CD4-positive, alpha-beta memory T cell (primary cell): ENCODE measurements at regions of chr5 and their contacts with region 1.

Region 1: GRCh38 chr5:163505368-163506094 is at the start of gene MAT2B:
- DNase-seq: peak; percentile 95 to 97 (median 95)
- H3K4me3 ChIP-seq: peak within 1 kb of the TSS; percentile 70 to 75
- H3K4me3 Mint-ChIP-seq: peak within 1 kb of the TSS; percentile 92 to 100 (median 98)
- H3K27ac ChIP-seq: peak within 1 kb of the TSS; percentile 90
- H3K27ac Mint-ChIP-seq: peak within 1 kb of the TSS; percentile 97 to 100 (median 99)
- H3K4me1 ChIP-seq: peaks cover 42% of the 10 kb centered on the region
- H3K4me1 Mint-ChIP-seq: peaks cover 30 to 71% (median 45%) of the 10 kb centered on the region in 4 donors
- H3K27me3 ChIP-seq: no peaks in the 10 kb centered on the region
- H3K27me3 Mint-ChIP-seq: no peaks in the 10 kb centered on the region
- total RNA-seq, gene MAT2B: 150 to 157 TPM

Region 2: DNA sequence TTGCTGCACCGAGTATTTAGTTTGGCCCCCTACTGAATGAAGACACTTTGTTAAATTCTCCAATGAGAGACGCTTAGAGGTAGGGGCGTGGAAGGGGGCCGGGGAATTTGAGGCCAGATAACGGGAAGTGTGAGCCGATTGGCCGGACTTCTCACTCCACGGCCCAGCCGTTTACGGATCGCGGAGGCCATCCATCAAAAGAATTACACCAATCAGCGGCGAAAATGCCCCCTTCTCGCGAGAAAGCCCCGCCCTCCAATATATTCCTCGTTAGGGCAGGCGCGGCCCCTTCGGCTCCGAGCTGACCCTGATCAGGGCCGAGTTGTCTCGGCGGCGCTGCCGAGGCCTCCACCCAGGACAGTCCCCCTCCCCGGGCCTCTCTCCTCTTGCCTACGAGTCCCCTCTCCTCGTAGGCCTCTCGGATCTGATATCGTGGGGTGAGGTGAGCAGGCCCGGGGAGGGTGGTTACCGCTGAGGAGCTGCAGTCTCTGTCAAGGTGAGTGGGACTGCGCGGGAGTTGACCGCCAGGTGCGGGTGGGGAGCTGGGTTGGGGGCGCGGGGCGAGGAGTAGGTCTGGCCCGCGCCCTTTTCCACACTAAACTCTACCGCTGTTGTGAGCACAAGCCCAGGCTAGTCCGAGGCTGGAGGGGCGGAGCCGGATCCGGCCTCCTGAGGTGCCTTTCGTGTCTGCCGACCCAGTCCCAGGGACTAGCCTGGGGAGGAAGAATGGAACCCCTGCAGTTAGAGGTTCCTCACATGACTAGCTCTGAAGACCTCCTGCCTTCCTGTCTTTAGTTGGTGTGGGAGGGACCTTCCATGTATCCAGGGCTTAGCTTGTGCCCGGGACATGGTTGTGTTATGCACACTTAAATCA is 68.0 kb before region 1 on chr5 and contains the start of gene CCNG1:
- CTCF ChIA-PET with region 1: interaction called, 10 read pairs
- POLR2A ChIA-PET with region 1: interaction called, 35 read pairs
- intact Hi-C with region 1: loop called (anchors 1 kb)
- DNase-seq: peak; percentile 86 to 91 (median 88)
- H3K4me3 ChIP-seq: peak within 1 kb of the TSS; percentile 85 to 87
- H3K4me3 Mint-ChIP-seq: peak within 1 kb of the TSS; percentile 88 to 97 (median 94)
- H3K27ac ChIP-seq: peak within 1 kb of the TSS; percentile 87
- H3K27ac Mint-ChIP-seq: peak within 1 kb of the TSS; percentile 91 to 99 (median 94)
- H3K4me1 ChIP-seq: peaks cover 45% of the 10 kb centered on the region
- H3K4me1 Mint-ChIP-seq: peaks cover 26 to 52% (median 40%) of the 10 kb centered on the region in 4 donors
- H3K27me3 ChIP-seq: no peaks in the 10 kb centered on the region
- H3K27me3 Mint-ChIP-seq: peaks cover 1% of the 10 kb centered on the region in 2 donors
- total RNA-seq, gene CCNG1: 132 to 133 TPM

Region 3: DNA sequence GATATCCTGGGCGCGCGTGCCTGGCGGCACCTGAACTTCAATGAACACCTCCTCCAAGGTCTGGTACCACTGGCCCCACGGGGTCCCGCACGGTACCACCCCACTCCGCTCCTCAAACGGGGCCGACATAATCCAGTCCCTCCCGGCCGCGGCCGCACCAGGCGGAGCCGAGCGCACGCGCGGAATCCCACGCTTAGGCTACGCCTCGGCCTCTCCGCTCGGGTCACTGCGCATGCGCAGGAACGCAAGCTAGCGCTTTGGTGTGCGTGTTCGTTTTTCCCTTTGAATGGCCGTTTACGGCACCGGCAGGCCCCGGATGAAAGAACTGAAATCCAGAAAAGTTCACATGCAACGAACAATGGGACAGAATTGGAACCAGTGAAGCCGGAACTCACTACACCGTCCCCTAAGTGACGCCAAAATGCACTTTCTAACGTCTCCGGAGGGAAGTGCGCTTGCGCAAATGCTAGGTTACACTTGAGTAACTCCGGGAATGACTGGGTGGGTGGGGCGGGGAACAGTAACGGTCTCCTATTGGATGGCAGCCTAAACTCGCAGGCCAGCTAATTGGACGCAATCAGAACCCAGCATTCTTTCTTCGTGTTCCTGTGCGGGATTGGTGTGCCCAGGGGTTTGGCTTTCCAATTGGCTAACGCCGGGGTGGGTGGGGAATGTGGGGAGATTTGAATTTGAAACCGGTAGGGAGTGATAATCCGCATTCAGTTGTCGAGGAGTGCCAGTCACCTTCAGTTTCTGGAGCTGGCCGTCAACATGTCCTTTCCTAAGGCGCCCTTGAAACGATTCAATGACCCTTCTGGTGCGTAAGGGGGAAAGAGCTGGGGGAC is 45.4 kb before region 1 on chr5 and contains the starts of genes HMMR and NUDCD2:
- CTCF ChIA-PET with region 1: interaction called, 63 read pairs
- POLR2A ChIA-PET with region 1: interaction called, 257 read pairs
- intact Hi-C with region 1: loop called (anchors 1 kb)
- DNase-seq: peak; percentile 97 to 99 (median 98)
- H3K4me3 ChIP-seq: peak within 1 kb of the TSS; percentile 68 to 99
- H3K4me3 Mint-ChIP-seq: peak within 1 kb of the TSS; percentile 94 to 99 (median 96)
- H3K27ac ChIP-seq: peak within 1 kb of the TSS; percentile 96
- H3K27ac Mint-ChIP-seq: peak within 1 kb of the TSS; percentile 98 to 100 (median 99)
- H3K4me1 ChIP-seq: peaks cover 50% of the 10 kb centered on the region
- H3K4me1 Mint-ChIP-seq: peaks cover 25 to 61% (median 42%) of the 10 kb centered on the region in 4 donors
- H3K27me3 ChIP-seq: no peaks in the 10 kb centered on the region
- H3K27me3 Mint-ChIP-seq: no peaks in the 10 kb centered on the region
- total RNA-seq, gene HMMR: 0.11 to 0.15 TPM
- total RNA-seq, gene NUDCD2: 26.0 to 26.4 TPM

Region 4: DNA sequence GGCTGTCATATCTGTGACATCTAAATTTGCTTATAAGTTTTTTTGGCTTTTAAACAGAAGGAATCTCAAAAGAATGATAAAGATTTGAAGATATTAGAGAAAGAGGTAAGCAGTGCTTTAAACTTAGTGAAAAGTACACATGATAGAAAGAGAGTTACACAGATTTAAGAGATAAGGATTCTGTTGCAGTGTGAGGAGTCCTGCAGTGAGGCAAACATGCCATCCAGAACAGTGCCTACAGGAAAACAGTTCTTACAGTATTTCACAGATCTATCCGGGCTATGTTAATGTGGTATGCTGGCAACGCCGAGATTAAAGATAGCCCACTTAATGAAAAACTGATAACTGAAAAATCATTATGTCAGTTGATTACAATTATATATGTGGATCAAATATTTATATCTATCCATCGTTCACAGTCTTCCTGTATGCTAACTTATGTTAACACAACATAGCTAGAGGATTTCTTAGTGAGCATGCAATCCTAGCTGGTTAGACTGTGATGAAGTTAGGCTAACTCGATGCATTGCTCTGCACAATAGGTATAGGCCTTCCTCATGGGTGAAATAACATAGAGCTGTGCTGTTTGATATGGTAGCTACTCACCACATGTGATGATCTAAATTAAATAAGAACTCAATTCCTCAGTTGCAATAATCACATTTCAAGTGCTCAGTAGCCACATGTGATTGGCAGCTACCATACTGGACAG is 37.7 kb before region 1 on chr5:
- CTCF ChIA-PET with region 1: interaction called, 18 read pairs
- POLR2A ChIA-PET with region 1: interaction called, 257 read pairs
- intact Hi-C with region 1: no loop called
- DNase-seq: no peak
- H3K4me3 ChIP-seq: no peak overlapping the region
- H3K4me3 Mint-ChIP-seq: peak overlapping the region in 2 of 8 donors; percentile 37 to 42
- H3K27ac ChIP-seq: no peak overlapping the region
- H3K27ac Mint-ChIP-seq: peak overlapping the region in 4 of 7 donors; percentile 31 to 79 (median 56)
- H3K4me1 ChIP-seq: peaks cover 15% of the 10 kb centered on the region
- H3K4me1 Mint-ChIP-seq: peaks cover 0 to 8% (median 4%) of the 10 kb centered on the region in 4 donors
- H3K27me3 ChIP-seq: no peaks in the 10 kb centered on the region
- H3K27me3 Mint-ChIP-seq: no peaks in the 10 kb centered on the region

Region 5: DNA sequence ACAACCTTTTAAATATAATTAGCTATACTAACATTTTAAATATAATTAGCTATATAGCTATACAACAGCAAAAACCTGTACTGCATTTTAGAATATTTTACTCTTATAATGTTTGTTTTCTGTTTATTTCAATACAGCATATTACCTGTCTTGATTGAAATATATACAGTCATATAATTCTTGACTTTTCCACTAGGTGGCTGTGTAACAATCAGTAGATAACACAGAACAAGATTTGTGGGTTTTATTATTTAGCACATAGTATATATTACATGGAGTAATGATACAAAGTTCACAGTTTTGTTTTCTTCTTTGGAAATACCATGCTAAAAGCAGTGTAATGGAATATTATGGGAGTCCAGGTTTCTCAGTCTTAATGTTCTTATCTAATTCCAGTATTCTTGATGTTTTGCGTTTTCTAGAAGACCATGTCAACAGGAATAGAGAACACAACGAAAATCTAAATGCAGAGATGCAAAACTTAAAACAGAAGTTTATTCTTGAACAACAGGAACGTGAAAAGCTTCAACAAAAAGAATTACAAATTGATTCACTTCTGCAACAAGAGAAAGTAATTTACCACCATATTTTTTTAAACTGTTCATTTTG is 31.8 kb before region 1 on chr5:
- CTCF ChIA-PET with region 1: interaction called, 18 read pairs
- POLR2A ChIA-PET with region 1: interaction called, 24 read pairs
- intact Hi-C with region 1: loop called (anchors 1 kb)
- DNase-seq: peak in 3 of 5 donors; percentile 23 to 39 (median 35)
- H3K4me3 ChIP-seq: no peak overlapping the region
- H3K4me3 Mint-ChIP-seq: no peak overlapping the region
- H3K27ac ChIP-seq: no peak overlapping the region
- H3K27ac Mint-ChIP-seq: peak overlapping the region in 1 of 7 donors; percentile 47
- H3K4me1 ChIP-seq: no peaks in the 10 kb centered on the region
- H3K4me1 Mint-ChIP-seq: peaks cover 0 to 7% (median 6%) of the 10 kb centered on the region in 4 donors
- H3K27me3 ChIP-seq: no peaks in the 10 kb centered on the region
- H3K27me3 Mint-ChIP-seq: no peaks in the 10 kb centered on the region

Region 6: DNA sequence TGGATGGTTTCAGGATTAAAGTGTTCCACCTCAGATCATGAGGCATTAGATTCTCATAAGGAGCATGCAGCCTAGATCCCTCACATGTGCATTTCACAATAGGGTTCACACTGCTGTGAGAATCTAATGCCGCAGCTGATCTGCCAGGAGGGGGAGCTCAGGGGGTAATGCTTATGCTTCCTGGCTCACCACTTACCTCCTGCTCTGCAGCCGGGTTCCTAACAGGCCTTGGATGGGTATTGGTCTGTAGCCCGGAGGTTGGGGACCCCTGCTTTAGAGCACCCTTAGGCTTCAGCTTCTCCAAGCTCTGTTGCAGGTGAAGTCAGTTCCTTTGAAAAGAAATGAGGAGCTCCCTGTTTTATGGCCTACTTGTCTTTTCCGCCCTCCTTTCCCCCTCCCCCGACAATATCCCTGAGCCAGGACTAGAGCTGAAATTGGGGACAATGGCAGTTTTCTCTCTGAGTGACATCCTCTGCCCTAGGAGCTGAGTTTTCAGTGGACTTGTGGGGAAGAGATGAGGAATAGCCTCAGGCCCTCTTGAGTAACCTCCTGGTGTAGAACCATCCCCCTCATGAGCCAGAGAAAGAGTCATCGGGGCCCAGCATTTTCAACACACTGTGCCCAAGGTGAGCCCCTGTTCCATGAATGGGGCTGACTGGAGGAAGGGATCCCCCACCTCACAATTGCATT is 16.3 kb before region 1 on chr5:
- CTCF ChIA-PET with region 1: interaction called, 15 read pairs
- POLR2A ChIA-PET with region 1: interaction called, 17 read pairs
- intact Hi-C with region 1: no loop called
- DNase-seq: peak in 1 of 5 donors; percentile 4
- H3K4me3 ChIP-seq: no peak overlapping the region
- H3K4me3 Mint-ChIP-seq: no peak overlapping the region
- H3K27ac ChIP-seq: no peak overlapping the region
- H3K27ac Mint-ChIP-seq: no peak overlapping the region
- H3K4me1 ChIP-seq: no peaks in the 10 kb centered on the region
- H3K4me1 Mint-ChIP-seq: peaks cover 0 to 3% (median 1%) of the 10 kb centered on the region in 4 donors
- H3K27me3 ChIP-seq: no peaks in the 10 kb centered on the region
- H3K27me3 Mint-ChIP-seq: no peaks in the 10 kb centered on the region

Region 7: GRCh38 chr5:163525096-163525495 is 19.6 kb after region 1 on chr5:
- CTCF ChIA-PET with region 1: no interaction called
- POLR2A ChIA-PET with region 1: interaction called, 7 read pairs
- intact Hi-C with region 1: loop called (anchors 2 kb)
- DNase-seq: no peak
- H3K4me3 ChIP-seq: no peak overlapping the region
- H3K4me3 Mint-ChIP-seq: no peak overlapping the region
- H3K27ac ChIP-seq: no peak overlapping the region
- H3K27ac Mint-ChIP-seq: no peak overlapping the region
- H3K4me1 ChIP-seq: no peaks in the 10 kb centered on the region
- H3K4me1 Mint-ChIP-seq: peaks cover 0 to 3% (median 2%) of the 10 kb centered on the region in 4 donors
- H3K27me3 ChIP-seq: no peaks in the 10 kb centered on the region
- H3K27me3 Mint-ChIP-seq: no peaks in the 10 kb centered on the region